GM18951 (cell line): ENCODE measurements at regions of chr2 and their contacts with region 1.

Region 1: GRCh38 chr2:27102329-27102728 is 15.8 kb downstream of the KHK start:
- POLR2A ChIP-seq: no peak

Region 2: DNA sequence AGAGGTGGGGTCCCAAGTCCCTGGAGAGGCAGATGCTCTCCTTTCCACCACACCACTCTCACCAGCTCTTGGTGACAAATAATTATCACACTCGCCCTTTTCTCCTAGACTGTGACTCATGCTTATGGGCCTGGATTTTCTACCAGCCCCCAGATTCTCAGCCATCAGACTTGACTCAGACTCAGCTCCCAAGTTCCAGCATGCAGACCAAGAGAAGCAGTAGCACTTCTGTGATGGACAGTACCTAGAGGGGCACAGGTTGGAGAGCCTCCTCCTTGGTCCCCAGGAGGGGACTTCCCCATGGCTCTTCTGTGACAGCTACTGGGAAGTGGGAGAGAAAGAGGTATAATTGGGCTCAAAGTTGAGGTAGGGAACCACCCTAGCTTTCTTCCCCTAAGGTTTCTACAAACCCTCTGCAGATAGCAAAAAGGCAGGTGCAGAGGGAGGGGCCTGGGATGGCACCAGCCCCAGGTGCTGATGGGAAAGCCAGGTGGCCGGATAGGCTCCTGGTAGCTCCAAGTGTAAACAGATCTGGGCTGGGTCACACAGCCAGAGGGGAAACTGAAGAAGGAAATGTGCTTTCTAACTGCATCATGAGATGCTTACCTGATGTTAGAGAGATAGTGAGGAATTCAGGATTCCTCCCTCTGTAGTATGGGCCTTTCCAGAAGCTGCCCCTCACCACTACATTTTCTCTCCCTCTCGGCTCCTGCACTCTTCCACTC is 50.6 kb after region 1 on chr2:
- in situ Hi-C with region 1: no loop called
- POLR2A ChIP-seq: no peak

Region 3: GRCh38 chr2:27281855-27282559 is 179.7 kb after region 1 on chr2 and contains the start of gene TRIM54:
- in situ Hi-C with region 1: loop called (anchors 10 kb)
- POLR2A ChIP-seq: no peak